ENCODE measurements at regions of chr9 and their contacts with region 1.

Region 1: GRCh38 chr9:131502781-131503625 is at the start of gene POMT1:
- DNase-seq: peak; percentile 81 to 96 (median 89)
- ATAC-seq: peak; percentile 45
- H3K4me3 ChIP-seq: peak within 1 kb of the TSS; percentile 85
- H3K4me3 Mint-ChIP-seq: peak within 1 kb of the TSS; percentile 85
- H3K27ac ChIP-seq: peak within 1 kb of the TSS; percentile 18 to 76
- H3K27ac Mint-ChIP-seq: peak within 1 kb of the TSS; percentile 90
- H3K4me1 ChIP-seq: peaks cover 63% of the 10 kb centered on the region
- H3K4me1 Mint-ChIP-seq: peaks cover 67% of the 10 kb centered on the region
- H3K27me3 ChIP-seq: no peaks in the 10 kb centered on the region
- H3K27me3 Mint-ChIP-seq: no peaks in the 10 kb centered on the region
- CTCF ChIP-seq: no peak
- total RNA-seq, gene POMT1: 50.1 to 50.5 TPM

Region 2: GRCh38 chr9:131530920-131531832 is 28.2 kb after region 1 on chr9 and contains the start of gene UCK1:
- CTCF ChIA-PET with region 1: no interaction called
- POLR2A ChIA-PET with region 1: interaction called, 5 read pairs
- intact Hi-C with region 1: loop called (anchors 1 to 5 kb)
- DNase-seq: peak; percentile 57 to 93 (median 72)
- ATAC-seq: peak; percentile 91
- H3K4me3 ChIP-seq: peak within 1 kb of the TSS; percentile 72
- H3K4me3 Mint-ChIP-seq: peak within 1 kb of the TSS; percentile 85
- H3K27ac ChIP-seq: peak within 1 kb of the TSS; percentile 13 to 44
- H3K27ac Mint-ChIP-seq: no peak within 1 kb of the TSS
- H3K4me1 ChIP-seq: peaks cover 44% of the 10 kb centered on the region
- H3K4me1 Mint-ChIP-seq: peaks cover 42% of the 10 kb centered on the region
- H3K27me3 ChIP-seq: no peaks in the 10 kb centered on the region
- H3K27me3 Mint-ChIP-seq: no peaks in the 10 kb centered on the region
- CTCF ChIP-seq: no peak
- total RNA-seq, gene UCK1: 22.1 to 22.5 TPM

Region 3: DNA sequence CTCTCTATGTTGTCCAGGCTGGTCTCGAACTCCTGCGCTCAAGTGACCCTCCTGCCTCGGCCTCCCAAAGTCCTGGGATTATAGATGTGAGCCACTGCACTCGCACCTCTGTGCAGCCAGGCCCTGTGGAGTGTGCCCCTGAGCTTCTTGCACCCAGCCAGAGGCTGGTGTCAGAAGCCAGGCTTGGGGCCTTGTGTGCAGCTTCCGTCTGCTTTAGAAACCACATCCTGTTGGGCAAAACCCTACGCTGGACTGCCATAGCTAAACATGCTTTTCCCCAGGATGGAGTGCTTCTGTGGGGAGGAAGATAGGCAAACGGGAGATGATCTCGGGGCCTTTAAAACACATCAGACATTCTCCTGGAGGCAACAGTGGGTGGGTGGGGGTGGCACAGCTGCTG is 82.4 kb after region 1 on chr9:
- CTCF ChIA-PET with region 1: no interaction called
- POLR2A ChIA-PET with region 1: interaction called, 12 read pairs
- intact Hi-C with region 1: no loop called
- DNase-seq: peak in 12 of 14 experiments; percentile 18 to 84 (median 44)
- ATAC-seq: peak; percentile 92
- H3K4me3 ChIP-seq: no peak overlapping the region
- H3K4me3 Mint-ChIP-seq: peak overlapping the region; percentile 75
- H3K27ac ChIP-seq: peak overlapping the region; percentile 57 to 61
- H3K27ac Mint-ChIP-seq: peak overlapping the region; percentile 96
- H3K4me1 ChIP-seq: peaks cover 41% of the 10 kb centered on the region
- H3K4me1 Mint-ChIP-seq: peaks cover 37% of the 10 kb centered on the region
- H3K27me3 ChIP-seq: no peaks in the 10 kb centered on the region
- H3K27me3 Mint-ChIP-seq: no peaks in the 10 kb centered on the region
- CTCF ChIP-seq: no peak

Region 4: DNA sequence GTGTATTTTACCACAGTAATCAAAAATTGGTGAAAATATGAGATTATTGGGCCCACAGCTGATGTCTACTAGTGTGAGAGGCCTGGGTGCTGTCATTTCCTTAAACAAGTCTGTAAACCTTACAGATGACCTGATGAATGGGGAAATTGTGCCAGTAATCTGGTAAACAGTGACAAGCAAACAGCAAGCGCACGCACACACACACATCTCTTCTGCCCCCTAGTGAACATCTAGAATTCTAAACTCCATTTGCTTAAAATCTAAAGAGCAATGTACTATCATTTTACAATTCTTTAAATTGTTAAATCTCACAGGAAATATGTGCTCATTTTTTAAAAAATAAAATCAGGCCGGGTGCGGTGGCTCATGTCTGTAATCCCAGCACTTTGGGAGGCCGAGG is 244.4 kb after region 1 on chr9:
- CTCF ChIA-PET with region 1: interaction called, 4 read pairs
- POLR2A ChIA-PET with region 1: interaction called, 5 read pairs
- intact Hi-C with region 1: loop called in 1 of 2 experiments (anchors 5 kb)
- DNase-seq: peak in 5 of 14 experiments; percentile 13 to 78 (median 65)
- ATAC-seq: peak; percentile 30
- H3K4me3 ChIP-seq: no peak overlapping the region
- H3K4me3 Mint-ChIP-seq: no peak overlapping the region
- H3K27ac ChIP-seq: no peak overlapping the region
- H3K27ac Mint-ChIP-seq: peak overlapping the region; percentile 47
- H3K4me1 ChIP-seq: peaks cover 25% of the 10 kb centered on the region
- H3K4me1 Mint-ChIP-seq: peaks cover 32% of the 10 kb centered on the region
- H3K27me3 ChIP-seq: no peaks in the 10 kb centered on the region
- H3K27me3 Mint-ChIP-seq: no peaks in the 10 kb centered on the region
- CTCF ChIP-seq: peak; percentile 66

Measured in CD4-positive, alpha-beta T cell (primary cell).